AG04449 (cell line): ENCODE measurements at regions of chr1 and their contacts with region 1.

Region 1: DNA sequence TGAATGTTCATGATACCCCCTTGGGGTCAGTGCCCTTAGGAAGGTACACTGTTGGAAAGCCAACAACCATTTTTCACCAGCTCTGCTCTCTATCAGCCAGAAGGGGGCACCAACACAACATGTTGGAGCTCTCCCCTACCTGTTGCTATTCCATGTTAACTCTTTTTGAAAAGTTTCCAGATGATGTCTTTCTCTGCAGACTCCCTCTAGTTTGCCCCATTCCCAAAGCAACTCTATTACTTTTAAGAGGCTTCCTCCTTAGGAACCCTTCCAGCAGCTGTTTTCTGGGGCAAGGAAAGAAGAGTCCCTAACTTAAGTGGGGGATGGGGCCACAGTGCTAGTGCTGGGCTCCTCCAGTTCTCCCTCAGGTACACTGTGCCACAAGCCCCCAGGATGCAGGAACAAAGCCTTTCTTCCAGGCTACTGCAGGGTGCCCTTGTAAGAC is 22.9 kb upstream of the NDC1 start:
- DNase-seq: no peak
- H3K4me3 ChIP-seq: no peak overlapping the region
- CTCF ChIP-seq: peak; percentile 74

Region 2: DNA sequence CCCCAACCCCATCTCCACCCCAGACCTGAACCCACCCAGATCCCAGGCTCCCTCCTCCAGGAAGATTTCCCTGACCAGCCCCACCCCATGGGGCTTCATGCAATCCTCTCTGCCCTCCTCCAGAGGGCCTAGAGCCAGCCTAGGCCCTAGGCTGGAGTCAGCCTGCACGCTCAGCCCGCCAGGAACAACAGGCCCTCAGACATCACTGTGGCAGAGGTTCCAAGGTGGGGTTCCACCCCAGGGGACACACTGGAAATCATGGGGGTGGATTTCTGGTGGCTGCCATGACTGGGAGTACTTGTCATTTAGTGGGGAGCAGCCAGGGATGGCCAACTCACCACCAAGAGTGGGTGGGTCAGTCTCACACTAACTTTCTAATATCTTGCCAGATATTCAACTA is 244.1 kb before region 1 on chr1:
- CTCF ChIA-PET with region 1: no interaction called
- POLR2A ChIA-PET with region 1: no interaction called
- DNase-seq: no peak
- H3K4me3 ChIP-seq: no peak overlapping the region
- CTCF ChIP-seq: no peak

Region 3: DNA sequence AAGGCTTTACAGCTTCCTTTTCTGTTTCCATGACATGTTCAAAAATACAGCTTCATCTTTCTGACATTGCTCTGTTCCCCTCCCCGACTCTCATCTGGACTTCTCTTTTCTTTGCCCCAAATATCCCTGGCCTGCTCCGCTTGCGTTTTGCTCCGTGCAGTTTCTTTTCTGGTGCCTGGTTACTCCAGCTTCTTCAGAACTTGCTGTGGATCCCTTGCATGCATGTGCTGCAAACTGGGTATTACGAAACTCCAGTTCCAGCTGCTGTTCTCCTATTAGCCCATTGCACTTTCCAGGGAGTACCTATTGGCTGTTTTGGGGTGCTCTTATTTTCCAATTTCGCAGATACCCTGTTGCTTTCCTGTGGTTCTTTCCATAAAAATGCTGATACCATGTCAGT is 13.0 kb before region 1 on chr1:
- CTCF ChIA-PET with region 1: interaction called, 53 read pairs
- POLR2A ChIA-PET with region 1: no interaction called
- DNase-seq: no peak
- H3K4me3 ChIP-seq: no peak overlapping the region
- CTCF ChIP-seq: no peak

Region 4: GRCh38 chr1:53945433-53946251 is 84.7 kb after region 1 on chr1 and contains the start of gene IFT25:
- CTCF ChIA-PET with region 1: interaction called, 83 read pairs
- POLR2A ChIA-PET with region 1: no interaction called
- DNase-seq: peak; percentile 74
- H3K4me3 ChIP-seq: peak within 1 kb of the TSS; percentile 97
- CTCF ChIP-seq: no peak

Region 5: GRCh38 chr1:53959664-53960250 is 98.8 kb after region 1 on chr1:
- CTCF ChIA-PET with region 1: interaction called, 102 read pairs
- POLR2A ChIA-PET with region 1: no interaction called
- DNase-seq: no peak
- H3K4me3 ChIP-seq: no peak overlapping the region
- CTCF ChIP-seq: peak; percentile 30

Region 6: DNA sequence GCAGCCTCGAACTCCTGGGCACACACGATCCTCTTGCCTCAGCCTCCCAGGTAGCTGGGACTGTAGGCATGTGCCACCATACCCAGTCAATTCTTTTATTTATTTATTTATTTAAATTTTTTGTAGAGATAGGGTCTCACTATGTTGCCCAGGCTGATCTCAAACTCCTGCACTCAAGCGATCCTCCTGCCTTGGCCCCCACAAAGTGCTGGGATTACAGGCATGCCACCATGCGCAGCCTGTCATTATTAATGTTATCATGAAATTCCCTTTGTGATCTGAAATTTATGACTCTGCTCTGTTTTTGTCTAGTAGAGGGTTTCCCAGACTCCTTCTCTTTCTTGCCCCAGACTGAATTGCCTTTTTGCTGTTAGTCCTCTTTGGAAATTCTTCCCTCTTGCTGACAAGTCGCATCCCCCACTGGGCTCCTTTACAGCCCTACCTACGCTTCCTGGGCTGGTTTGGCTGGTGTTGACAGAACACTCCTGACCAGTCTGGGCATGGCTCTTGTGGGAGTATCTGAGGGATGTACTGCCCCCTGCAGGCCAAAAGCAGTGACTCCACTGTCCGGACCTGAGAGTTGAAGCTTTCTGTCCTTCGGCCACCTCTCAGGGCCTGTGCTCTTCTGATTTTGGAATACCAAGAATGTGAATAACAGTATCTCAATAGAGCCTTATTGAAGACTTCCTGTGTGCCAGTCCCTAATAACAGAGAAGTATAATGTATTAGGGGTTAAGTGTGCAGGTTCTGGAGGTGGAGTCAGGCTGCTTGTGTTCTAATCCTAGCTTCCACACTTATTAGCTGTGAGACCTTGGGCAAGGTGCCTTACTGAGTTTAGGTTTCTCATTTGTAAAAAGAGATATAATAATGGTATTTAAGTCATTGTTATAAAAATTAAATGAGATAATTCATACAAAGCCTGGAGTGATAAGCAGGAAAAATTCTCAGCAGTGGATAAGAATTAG is 220.6 kb after region 1 on chr1:
- CTCF ChIA-PET with region 1: interaction called, 18 read pairs
- POLR2A ChIA-PET with region 1: no interaction called
- DNase-seq: no peak
- H3K4me3 ChIP-seq: no peak overlapping the region
- CTCF ChIP-seq: peak; percentile 70